Activated B cell treated with CpG ODN at 0.5 μM for 24 hours (primary cell): ENCODE measurements at regions of chr14 and their contacts with region 1.

Region 1: DNA sequence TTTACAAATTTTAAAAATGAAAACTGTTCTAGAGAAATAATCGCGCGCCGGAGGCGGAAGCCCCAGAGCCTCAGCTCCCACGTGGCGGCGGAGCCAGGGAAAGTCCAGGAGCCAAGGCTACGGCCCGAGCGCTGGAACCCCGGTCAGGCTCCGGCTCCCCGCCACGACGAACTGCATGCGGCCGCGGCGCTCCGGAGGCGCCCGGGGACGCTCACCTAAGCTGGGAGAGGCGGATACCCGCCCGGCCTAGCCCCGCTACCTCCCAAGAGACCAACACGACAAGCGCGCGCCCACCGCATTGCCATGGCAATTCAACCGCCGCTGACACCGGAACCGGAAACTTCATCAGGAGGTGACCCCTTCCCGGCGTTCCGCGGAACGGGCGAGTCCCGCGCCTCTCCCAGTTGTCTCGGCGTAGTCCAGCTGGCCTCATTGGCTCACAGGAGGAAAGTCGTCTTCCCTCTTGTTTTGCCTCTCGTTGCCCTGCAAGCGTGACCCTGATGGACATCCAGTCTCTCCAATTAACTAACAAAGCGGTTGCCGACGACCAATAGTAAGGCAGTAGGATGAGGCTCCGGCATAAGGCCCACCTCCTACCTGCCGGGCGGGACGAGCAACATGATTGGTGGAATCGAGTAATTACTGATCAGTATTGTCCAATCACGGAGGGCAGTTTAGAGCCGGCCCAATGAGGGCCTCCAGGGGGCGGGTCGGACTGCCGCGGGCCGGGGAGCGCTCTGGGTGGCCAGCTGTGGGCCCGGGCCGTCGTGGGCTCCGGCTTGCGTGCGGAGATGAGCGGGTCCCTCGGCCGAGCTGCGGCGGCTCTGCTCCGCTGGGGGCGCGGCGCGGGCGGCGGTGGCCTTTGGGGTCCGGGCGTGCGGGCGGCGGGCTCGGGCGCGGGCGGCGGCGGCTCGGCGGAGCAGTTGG is at the start of gene GLRX5:
- DNase-seq: peak; percentile 93
- ATAC-seq: peak; percentile 87
- H3K4me3 Mint-ChIP-seq: peak within 1 kb of the TSS; percentile 92
- H3K27ac Mint-ChIP-seq: peak within 1 kb of the TSS; percentile 93
- H3K4me1 Mint-ChIP-seq: peaks cover 50% of the 10 kb centered on the region
- H3K27me3 Mint-ChIP-seq: no peaks in the 10 kb centered on the region
- CTCF ChIP-seq: no peak
- total RNA-seq, gene GLRX5: 20.5 and 22.4 TPM in 2 replicates

Region 2: DNA sequence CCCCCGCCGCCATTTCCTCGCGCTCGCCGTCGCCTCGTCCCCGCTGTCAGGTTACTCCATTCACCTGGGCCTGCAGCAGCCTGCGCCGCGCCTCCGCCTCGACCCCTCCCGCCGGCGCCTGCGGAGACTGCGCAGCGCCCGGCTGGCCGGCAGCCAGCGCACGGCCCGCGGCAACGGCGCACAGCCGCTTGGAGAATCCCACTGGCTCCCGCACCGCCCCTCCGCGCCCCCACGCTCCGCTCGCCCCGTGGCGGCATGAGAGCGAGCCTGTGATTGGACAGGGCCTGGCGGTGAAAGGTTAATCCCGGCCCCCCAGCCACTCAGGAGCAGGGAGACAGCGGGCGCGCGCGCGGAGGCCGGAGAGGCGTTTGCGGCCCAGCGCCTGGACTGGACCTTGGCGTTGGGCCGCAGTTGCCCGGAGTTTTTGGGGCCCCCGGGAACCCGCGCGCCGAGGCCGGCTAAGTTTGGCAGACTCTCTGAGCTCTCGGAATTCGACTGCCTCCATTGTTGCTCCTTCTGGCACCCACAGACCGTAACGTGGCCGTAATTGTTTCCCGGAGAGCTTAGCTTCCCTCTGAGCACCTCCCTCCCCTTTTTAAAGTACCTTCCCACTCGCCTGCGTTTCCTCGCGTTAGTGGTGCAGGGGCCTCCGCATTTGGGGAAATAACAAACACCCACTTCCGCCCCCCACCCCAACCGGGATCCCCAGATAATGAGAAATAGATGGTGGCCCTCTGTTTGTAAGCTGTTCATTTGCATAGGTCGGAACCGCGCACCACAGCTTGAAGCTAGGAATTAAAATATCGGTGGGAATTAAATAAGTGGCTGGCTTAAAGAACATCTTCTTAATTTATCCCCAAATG is 377.0 kb before region 1 on chr14 and contains the start of gene DICER1:
- CTCF ChIA-PET with region 1: no interaction called
- POLR2A ChIA-PET with region 1: no interaction called
- intact Hi-C with region 1: loop called (anchors 1 kb)
- DNase-seq: peak; percentile 96
- ATAC-seq: peak; percentile 87
- H3K4me3 Mint-ChIP-seq: peak within 1 kb of the TSS; percentile 97
- H3K27ac Mint-ChIP-seq: peak within 1 kb of the TSS; percentile 100
- H3K4me1 Mint-ChIP-seq: peaks cover 45% of the 10 kb centered on the region
- H3K27me3 Mint-ChIP-seq: no peaks in the 10 kb centered on the region
- CTCF ChIP-seq: no peak
- total RNA-seq, gene DICER1: 67.3 and 69.6 TPM in 2 replicates

Region 3: GRCh38 chr14:95442633-95443021 is 91.9 kb before region 1 on chr14:
- CTCF ChIA-PET with region 1: interaction called, 162 read pairs
- POLR2A ChIA-PET with region 1: interaction called, 16 read pairs
- intact Hi-C with region 1: loop called (anchors 1 kb)
- DNase-seq: peak; percentile 55
- ATAC-seq: peak; percentile 91
- H3K4me3 Mint-ChIP-seq: no peak overlapping the region
- H3K27ac Mint-ChIP-seq: peak overlapping the region; percentile 78
- H3K4me1 Mint-ChIP-seq: peaks cover 34% of the 10 kb centered on the region
- H3K27me3 Mint-ChIP-seq: no peaks in the 10 kb centered on the region
- CTCF ChIP-seq: no peak

Region 4: GRCh38 chr14:95495538-95496025 is 39.0 kb before region 1 on chr14:
- CTCF ChIA-PET with region 1: no interaction called
- POLR2A ChIA-PET with region 1: interaction called, 19 read pairs
- intact Hi-C with region 1: loop called (anchors 1 kb)
- DNase-seq: peak; percentile 60
- ATAC-seq: peak; percentile 87
- H3K4me3 Mint-ChIP-seq: peak overlapping the region; percentile 62
- H3K27ac Mint-ChIP-seq: peak overlapping the region; percentile 91
- H3K4me1 Mint-ChIP-seq: peaks cover 86% of the 10 kb centered on the region
- H3K27me3 Mint-ChIP-seq: no peaks in the 10 kb centered on the region
- CTCF ChIP-seq: no peak

Region 5: DNA sequence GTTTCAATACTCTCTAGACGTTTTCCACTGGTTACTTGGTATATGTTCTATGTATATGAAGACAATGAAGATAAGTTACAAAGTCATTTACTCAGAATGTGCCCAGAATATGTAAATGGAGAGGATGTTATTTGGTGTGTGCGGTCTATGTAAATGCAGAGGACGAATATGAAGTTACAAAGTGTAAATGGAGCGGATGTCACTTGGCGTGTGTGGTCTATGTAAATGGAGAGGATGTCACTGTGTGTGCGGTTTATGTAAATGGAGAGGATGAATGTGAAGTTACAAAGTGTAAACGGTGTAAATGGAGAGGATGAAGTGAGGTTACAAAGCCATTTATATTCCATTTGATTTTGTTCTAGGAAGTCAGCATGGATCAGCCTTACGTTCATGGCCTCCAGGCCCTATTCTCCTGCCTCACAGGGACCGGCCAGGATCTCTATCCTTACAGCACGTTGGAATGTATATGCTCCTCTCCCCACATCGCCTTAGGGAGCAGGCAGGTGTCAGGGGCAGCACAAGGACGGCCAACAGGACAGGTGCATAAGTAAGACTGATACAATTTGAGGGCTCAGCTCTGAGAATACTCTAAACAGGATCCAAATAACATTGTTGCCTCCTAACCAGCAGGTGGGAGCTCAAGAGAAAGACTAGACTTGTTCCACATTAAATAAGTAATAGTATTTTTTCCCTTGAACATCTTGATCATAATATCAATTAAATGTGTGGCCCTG is 42.7 kb after region 1 on chr14:
- CTCF ChIA-PET with region 1: no interaction called
- POLR2A ChIA-PET with region 1: no interaction called
- intact Hi-C with region 1: loop called (anchors 1 kb)
- DNase-seq: no peak
- ATAC-seq: peak; percentile 95
- H3K4me3 Mint-ChIP-seq: peak overlapping the region; percentile 13
- H3K27ac Mint-ChIP-seq: no peak overlapping the region
- H3K4me1 Mint-ChIP-seq: peaks cover 26% of the 10 kb centered on the region
- H3K27me3 Mint-ChIP-seq: peaks cover 45% of the 10 kb centered on the region
- CTCF ChIP-seq: no peak

Region 6: DNA sequence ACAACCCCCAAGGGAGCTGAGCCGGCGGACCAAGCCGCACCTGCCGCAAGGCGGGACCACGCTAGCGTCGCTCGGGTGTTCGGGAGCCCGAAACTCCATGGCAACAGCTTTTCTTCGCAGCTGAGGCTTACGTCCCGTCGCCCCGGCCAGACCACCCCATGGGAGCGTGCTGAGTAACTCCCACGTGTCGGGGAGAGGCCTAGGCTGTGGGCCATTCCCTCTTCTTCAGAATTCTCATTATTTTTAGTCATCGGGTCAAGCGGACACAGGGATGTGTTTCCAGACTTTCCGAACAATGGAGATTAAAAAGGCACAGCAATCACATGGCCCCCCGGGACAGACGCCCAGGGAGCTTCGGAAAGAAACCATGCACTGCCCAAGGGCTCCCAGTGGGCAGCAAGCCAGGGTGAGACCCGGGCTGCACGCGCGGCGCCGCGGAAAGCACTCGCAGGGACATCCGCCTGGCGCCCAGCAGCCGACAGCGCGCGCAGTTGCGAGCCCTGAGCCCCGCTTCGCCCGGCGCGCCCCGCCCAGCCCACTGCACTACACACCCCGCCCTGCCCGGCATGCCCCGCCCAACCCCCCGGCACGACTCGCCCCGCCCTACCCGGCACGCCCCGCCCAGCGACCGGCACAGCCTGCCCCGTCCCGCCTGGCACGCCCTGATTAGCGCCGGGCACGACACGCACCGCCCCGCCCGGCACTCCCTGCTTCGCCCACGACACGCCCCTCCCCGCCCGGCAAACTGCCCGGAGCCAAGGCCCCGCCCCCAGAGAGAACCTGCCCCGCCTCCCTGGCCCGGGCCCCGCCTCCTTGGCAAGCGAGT is 856.9 kb after region 1 on chr14:
- CTCF ChIA-PET with region 1: no interaction called
- POLR2A ChIA-PET with region 1: no interaction called
- intact Hi-C with region 1: loop called (anchors 1 kb)
- DNase-seq: peak; percentile 100
- ATAC-seq: peak; percentile 93
- H3K4me3 Mint-ChIP-seq: peak overlapping the region; percentile 91
- H3K27ac Mint-ChIP-seq: peak overlapping the region; percentile 88
- H3K4me1 Mint-ChIP-seq: peaks cover 6% of the 10 kb centered on the region
- H3K27me3 Mint-ChIP-seq: peaks cover 3% of the 10 kb centered on the region
- CTCF ChIP-seq: no peak

Region 7: DNA sequence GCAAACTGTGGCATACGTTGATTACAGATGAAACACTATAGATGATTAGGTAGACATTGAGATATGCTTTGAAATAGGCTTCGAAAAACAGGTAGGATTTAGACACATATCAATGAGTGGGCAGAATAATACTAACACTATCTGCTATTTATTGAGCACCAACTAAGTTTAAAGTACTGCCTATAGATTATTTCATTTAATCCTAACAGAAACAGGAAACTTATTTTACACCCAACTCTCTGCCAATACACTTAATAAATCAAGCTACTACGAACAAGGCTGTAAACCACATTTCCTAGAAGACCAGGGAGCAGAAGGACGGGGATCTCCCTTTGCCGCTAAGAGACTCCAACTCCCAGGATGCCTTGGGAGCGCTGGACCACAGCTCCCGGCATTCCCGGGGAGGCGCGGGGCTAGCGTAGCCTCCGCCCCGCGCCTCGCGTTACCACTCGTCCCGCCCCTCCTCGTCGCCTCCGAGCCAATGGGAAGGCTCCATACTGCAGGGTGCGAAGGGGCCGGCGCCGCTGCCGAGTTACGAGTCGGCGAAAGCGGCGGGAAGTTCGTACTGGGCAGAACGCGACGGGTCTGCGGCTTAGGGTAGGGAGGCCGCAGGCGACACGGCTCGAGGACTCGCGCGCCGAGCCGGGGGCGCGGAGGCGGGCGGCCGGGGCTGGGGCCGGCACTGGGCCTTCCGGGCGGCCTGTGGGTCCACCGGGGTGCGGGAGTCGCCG is 1262.5 kb after region 1 on chr14 and contains the start of gene VRK1:
- CTCF ChIA-PET with region 1: no interaction called
- POLR2A ChIA-PET with region 1: no interaction called
- intact Hi-C with region 1: loop called (anchors 2 kb)
- DNase-seq: peak; percentile 92
- ATAC-seq: peak; percentile 98
- H3K4me3 Mint-ChIP-seq: peak within 1 kb of the TSS; percentile 87
- H3K27ac Mint-ChIP-seq: peak within 1 kb of the TSS; percentile 74
- H3K4me1 Mint-ChIP-seq: peaks cover 24% of the 10 kb centered on the region
- H3K27me3 Mint-ChIP-seq: peaks cover 18% of the 10 kb centered on the region
- CTCF ChIP-seq: no peak
- total RNA-seq, gene VRK1: 30.2 and 32.1 TPM in 2 replicates